ENCODE measurements at regions of chr3 and their contacts with region 1.

Region 1: DNA sequence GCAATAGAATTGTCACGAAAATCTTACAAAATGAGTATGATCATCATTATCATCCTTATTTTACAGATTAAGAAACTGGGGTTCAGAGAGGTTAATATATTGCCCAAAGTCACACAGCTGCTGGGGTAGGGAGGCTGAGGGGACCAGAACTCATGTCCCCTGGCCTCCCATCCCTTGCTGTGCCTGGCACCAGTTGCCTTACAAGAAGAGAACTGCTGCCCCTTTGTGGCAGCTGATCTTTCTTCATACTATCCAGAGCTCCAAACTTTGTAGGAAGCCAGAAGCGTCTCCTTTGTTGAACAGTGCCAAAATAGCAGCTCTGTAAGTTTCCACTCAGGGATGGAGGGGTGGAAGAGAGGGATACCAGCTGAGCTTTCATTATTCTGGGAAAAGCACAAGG is 236.8 kb upstream of the TBC1D5 start:
- DNase-seq: peak in 1 of 2 experiments; percentile 11
- H3K4me3 ChIP-seq: no peak overlapping the region
- H3K4me3 Mint-ChIP-seq: no peak overlapping the region
- H3K27ac Mint-ChIP-seq: no peak overlapping the region
- H3K4me1 ChIP-seq: peaks cover 4% of the 10 kb centered on the region; the same call in 1 of the 2 replicates
- H3K4me1 Mint-ChIP-seq: no peaks in the 10 kb centered on the region
- H3K27me3 ChIP-seq: no peaks in the 10 kb centered on the region; the same call in 1 of the 2 replicates
- H3K27me3 Mint-ChIP-seq: no peaks in the 10 kb centered on the region
- CTCF ChIP-seq: no peak

Region 2: DNA sequence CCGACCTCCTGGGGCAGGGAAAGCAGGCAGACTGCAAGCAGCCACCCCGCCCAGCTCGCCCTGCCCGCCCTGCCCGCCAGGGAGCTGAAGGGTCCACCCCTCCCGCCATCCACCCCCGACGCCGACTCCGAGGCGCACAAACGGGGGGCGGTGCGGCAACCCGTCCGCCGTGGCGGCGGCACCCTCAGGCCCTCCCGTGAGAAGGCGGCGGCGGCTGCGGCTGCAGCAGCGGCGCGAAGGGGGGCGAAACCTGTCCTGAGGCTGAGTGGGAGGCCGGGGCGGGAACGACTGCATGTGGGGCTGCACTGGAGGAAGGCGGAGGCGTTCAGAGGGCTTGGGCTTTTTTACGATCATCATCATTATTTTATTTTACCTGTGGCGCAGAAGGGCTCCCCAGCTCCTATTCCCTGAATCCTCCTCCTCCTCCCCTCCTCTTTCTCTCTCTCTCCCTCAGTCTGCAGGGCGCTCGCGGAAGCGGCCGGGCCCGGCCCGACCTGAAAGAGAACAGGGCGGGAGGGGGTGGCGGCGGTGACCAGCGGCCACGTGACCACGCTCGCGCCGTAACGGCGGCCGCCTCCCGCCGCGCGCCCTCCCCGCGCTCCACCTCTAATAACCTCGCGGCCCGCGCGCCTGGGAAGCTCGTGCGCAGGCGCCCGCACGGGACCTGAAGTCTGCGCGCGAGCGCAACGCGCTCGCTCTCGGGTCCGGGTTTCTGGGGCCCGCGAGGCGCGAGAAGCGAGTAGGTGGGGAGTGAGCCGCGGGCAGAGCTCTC is 237.0 kb before region 1 on chr3 and contains the start of gene TBC1D5:
- CTCF ChIA-PET with region 1: no interaction called
- POLR2A ChIA-PET with region 1: no interaction called
- intact Hi-C with region 1: loop called (anchors 5 kb)
- DNase-seq: peak; percentile 97
- H3K4me3 ChIP-seq: peak within 1 kb of the TSS; percentile 77
- H3K4me3 Mint-ChIP-seq: peak within 1 kb of the TSS; percentile 82
- H3K27ac Mint-ChIP-seq: peak within 1 kb of the TSS; percentile 80
- H3K4me1 ChIP-seq: peaks cover 11% of the 10 kb centered on the region; the same call in 1 of the 2 replicates
- H3K4me1 Mint-ChIP-seq: peaks cover 17% of the 10 kb centered on the region
- H3K27me3 ChIP-seq: no peaks in the 10 kb centered on the region
- H3K27me3 Mint-ChIP-seq: no peaks in the 10 kb centered on the region
- CTCF ChIP-seq: no peak
- total RNA-seq, gene TBC1D5: 36.4 and 36.5 TPM in 2 replicates

Region 3: GRCh38 chr3:17894434-17895060 is 84.7 kb before region 1 on chr3:
- CTCF ChIA-PET with region 1: interaction called, 4 read pairs
- POLR2A ChIA-PET with region 1: no interaction called
- intact Hi-C with region 1: loop called (anchors 1 kb)
- DNase-seq: peak; percentile 54 to 62
- H3K4me3 ChIP-seq: no peak overlapping the region
- H3K4me3 Mint-ChIP-seq: no peak overlapping the region
- H3K27ac Mint-ChIP-seq: peak overlapping the region; percentile 24
- H3K4me1 ChIP-seq: peaks cover 25% of the 10 kb centered on the region
- H3K4me1 Mint-ChIP-seq: peaks cover 22% of the 10 kb centered on the region
- H3K27me3 ChIP-seq: no peaks in the 10 kb centered on the region
- H3K27me3 Mint-ChIP-seq: no peaks in the 10 kb centered on the region
- CTCF ChIP-seq: peak; percentile 50 to 59

Region 4: GRCh38 chr3:17928502-17929145 is 50.6 kb before region 1 on chr3:
- CTCF ChIA-PET with region 1: interaction called, 10 read pairs
- POLR2A ChIA-PET with region 1: no interaction called
- intact Hi-C with region 1: no loop called
- DNase-seq: no peak
- H3K4me3 ChIP-seq: no peak overlapping the region
- H3K4me3 Mint-ChIP-seq: no peak overlapping the region
- H3K27ac Mint-ChIP-seq: no peak overlapping the region
- H3K4me1 ChIP-seq: no peaks in the 10 kb centered on the region
- H3K4me1 Mint-ChIP-seq: peaks cover 18% of the 10 kb centered on the region
- H3K27me3 ChIP-seq: no peaks in the 10 kb centered on the region
- H3K27me3 Mint-ChIP-seq: no peaks in the 10 kb centered on the region
- CTCF ChIP-seq: no peak

Region 5: DNA sequence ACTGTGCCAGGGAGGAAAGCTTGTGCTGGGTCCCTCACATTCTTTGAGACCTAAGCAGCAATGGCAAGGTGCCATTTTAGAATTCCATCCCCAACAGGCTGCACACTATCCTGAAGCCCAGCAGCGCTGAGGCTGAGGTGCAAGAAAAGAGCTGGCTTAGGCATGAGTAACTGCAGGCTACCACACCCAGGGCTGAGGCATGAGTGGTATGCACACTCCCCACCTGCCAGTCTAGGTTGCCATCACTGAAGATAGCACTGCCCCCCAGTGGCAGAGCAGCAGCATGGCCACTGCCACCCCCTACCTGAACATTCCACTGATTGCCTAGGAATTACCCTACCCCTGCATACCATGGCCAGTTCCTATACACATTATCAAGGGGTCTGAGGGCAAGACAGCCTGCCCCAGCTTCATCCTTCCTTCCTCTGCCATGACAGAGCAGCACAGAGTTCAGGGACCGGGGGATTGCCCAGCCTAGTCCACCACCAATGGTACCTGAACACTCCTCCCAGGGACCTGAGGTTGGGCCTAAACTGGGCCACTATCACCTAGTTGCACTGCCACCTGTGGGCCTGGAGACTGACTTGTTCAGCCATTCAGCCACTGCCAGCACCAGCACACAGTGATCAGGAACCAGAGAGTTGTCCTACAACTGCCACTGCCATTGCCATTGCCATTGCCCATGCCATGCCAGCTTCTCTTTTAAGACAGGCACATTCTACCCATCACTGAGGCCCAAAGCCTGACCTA is 316.1 kb after region 1 on chr3:
- CTCF ChIA-PET with region 1: no interaction called
- POLR2A ChIA-PET with region 1: no interaction called
- intact Hi-C with region 1: loop called (anchors 5 kb)
- DNase-seq: peak; percentile 82 to 84
- H3K4me3 ChIP-seq: no peak overlapping the region
- H3K4me3 Mint-ChIP-seq: no peak overlapping the region
- H3K27ac Mint-ChIP-seq: peak overlapping the region; percentile 80
- H3K4me1 ChIP-seq: peaks cover 8% of the 10 kb centered on the region
- H3K4me1 Mint-ChIP-seq: peaks cover 7% of the 10 kb centered on the region
- H3K27me3 ChIP-seq: no peaks in the 10 kb centered on the region
- H3K27me3 Mint-ChIP-seq: no peaks in the 10 kb centered on the region
- CTCF ChIP-seq: peak; percentile 64 to 70

Region 6: GRCh38 chr3:18389108-18389733 is 410.0 kb after region 1 on chr3:
- CTCF ChIA-PET with region 1: no interaction called
- POLR2A ChIA-PET with region 1: no interaction called
- intact Hi-C with region 1: loop called (anchors 10 kb)
- DNase-seq: peak in 1 of 2 experiments; percentile 43
- H3K4me3 ChIP-seq: no peak overlapping the region
- H3K4me3 Mint-ChIP-seq: no peak overlapping the region
- H3K27ac Mint-ChIP-seq: no peak overlapping the region
- H3K4me1 ChIP-seq: 0 out of 2 replicates have a peak, but pooled peaks cover 3% of the 10 kb centered on the region
- H3K4me1 Mint-ChIP-seq: no peaks in the 10 kb centered on the region
- H3K27me3 ChIP-seq: no peaks in the 10 kb centered on the region
- H3K27me3 Mint-ChIP-seq: no peaks in the 10 kb centered on the region
- CTCF ChIP-seq: peak; percentile 48 to 58

Measured in Caco-2 (cell line).